BJ (cell line): ENCODE measurements at regions of chr1 and their contacts with region 1.

Region 1: DNA sequence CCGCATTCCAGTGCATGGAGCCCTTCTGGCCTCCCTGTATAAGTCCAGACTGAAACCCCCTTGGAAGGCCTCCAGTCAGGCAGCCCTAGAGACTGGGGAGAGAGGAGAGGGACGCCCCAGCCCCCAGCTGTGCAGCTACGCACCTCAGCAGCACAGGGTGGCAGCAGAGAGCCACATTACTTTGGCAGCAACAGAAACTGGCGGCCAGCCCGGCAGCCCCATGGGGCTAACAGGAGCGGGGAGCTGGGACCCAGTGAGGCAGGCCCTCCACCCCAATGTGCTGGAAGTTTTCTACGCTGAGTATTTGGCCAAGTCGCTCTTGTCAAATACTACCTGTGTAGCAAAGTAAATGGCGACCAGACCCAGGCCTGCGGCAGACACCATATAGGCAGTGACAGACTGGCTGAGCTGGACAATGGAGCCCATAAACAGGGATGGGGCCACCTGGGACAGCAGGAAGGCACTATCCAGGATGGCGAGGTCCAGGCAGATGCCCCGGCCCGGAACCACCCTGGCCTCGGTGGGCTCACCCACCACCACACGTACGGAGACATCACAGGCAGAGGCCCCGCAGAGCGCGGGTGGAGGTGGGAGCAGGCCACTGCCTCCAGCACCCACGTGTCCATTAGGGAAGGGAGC is 21.2 kb downstream of the SLC45A3 start:
- DNase-seq: no peak
- H3K4me3 ChIP-seq: no peak overlapping the region
- H3K27me3 ChIP-seq: no peaks in the 10 kb centered on the region
- CTCF ChIP-seq: peak; percentile 92

Region 2: GRCh38 chr1:204802401-204803175 is 856.5 kb before region 1 on chr1:
- CTCF ChIA-PET with region 1: no interaction called
- POLR2A ChIA-PET with region 1: no interaction called
- DNase-seq: no peak
- H3K4me3 ChIP-seq: no peak overlapping the region
- H3K27me3 ChIP-seq: peaks cover 19% of the 10 kb centered on the region
- CTCF ChIP-seq: no peak

Region 3: GRCh38 chr1:205578780-205579606 is 80.1 kb before region 1 on chr1:
- CTCF ChIA-PET with region 1: interaction called, 18 read pairs
- POLR2A ChIA-PET with region 1: no interaction called
- DNase-seq: no peak
- H3K4me3 ChIP-seq: no peak overlapping the region
- H3K27me3 ChIP-seq: peaks cover 52% of the 10 kb centered on the region
- CTCF ChIP-seq: no peak

Region 4: GRCh38 chr1:205600085-205600484 is 59.0 kb before region 1 on chr1:
- CTCF ChIA-PET with region 1: interaction called, 426 read pairs
- POLR2A ChIA-PET with region 1: no interaction called
- DNase-seq: no peak
- H3K4me3 ChIP-seq: no peak overlapping the region
- H3K27me3 ChIP-seq: no peaks in the 10 kb centered on the region
- CTCF ChIP-seq: no peak

Region 5: GRCh38 chr1:205680073-205680851 is 21.2 kb after region 1 on chr1 and contains the start of gene SLC45A3:
- CTCF ChIA-PET with region 1: interaction called, 161 read pairs
- POLR2A ChIA-PET with region 1: no interaction called
- DNase-seq: no peak
- H3K4me3 ChIP-seq: peak within 1 kb of the TSS; percentile 58
- H3K27me3 ChIP-seq: peaks cover 2% of the 10 kb centered on the region; the same call in 1 of the 2 replicates
- CTCF ChIP-seq: no peak
- polyA plus RNA-seq, gene SLC45A3: 0.70 and 0.91 TPM in 2 replicates

Region 6: DNA sequence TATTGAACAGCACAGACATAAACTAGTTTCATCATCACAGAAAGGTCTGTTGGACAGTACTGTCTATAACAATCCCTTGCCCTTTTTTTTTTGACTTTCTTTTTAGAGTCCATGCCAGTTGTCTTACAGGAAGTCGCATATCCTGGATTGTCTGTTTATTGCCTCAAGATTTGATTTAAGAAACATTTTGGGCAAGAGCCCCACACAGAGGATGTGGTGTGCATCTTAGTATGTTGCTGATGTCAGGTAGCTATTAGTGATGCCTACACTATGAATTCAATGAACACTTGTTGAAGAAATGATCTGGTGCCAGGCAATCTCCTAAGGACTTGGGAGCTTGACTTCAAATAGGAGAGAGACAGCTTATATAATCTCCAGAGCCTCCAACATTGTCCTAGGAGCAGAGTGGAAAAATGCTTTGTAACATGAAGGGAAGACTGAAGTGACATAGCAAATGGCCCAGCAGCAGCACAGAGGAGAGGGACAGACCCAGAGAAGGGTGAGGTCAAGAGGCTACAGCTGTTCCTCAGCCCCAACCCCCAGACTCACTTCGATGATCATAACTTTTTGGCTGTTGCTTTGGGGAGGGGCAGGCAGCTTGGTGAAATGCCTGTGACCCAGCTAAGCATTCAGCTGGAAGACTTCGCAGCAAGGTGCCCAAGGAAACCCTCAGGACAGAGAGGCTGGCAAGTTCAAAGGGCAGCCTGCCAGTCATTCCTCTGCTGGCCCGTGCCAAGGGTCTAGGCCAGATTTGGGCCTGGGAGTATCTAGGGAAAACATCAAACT is 123.8 kb after region 1 on chr1:
- CTCF ChIA-PET with region 1: interaction called, 10 read pairs
- POLR2A ChIA-PET with region 1: no interaction called
- DNase-seq: no peak
- H3K4me3 ChIP-seq: no peak overlapping the region
- H3K27me3 ChIP-seq: no peaks in the 10 kb centered on the region
- CTCF ChIP-seq: no peak

Region 7: DNA sequence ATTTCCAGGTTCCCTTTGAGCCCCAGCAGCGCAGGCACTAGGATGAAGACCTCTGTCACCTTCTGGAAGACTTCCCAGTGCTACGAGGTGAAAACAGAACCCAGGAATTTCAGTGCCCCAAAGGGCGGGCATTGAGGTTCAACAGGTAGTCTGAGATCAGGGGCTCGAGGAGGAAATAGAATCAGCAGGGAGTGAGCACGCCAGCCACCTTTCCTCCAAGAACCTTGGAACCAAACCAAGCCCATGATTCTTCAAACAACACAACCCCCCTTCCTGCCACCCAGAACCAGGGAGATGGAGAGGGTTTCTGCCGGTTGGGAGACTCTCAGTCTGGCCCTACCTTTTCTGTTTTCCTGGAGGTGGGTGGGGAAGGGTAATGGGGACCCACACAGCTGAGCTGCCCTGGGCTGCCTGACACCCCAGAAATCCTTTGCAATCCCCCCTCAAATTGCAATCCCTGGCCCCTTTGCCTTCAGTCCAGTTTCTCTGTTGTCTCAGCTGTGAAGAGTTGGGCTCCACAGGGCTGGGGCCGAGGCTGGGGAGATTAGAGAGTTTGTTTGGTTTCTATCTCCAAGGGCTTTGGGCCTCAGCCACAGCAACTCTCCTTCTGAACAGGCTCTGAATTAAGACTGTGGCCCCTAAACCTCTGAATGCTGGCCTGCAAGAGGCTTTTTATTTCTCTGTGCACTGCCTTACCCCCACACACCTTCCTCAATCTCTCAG is 142.1 kb after region 1 on chr1:
- CTCF ChIA-PET with region 1: no interaction called
- POLR2A ChIA-PET with region 1: no interaction called
- DNase-seq: no peak
- H3K4me3 ChIP-seq: no peak overlapping the region
- H3K27me3 ChIP-seq: no peaks in the 10 kb centered on the region
- CTCF ChIP-seq: no peak

Region 8: GRCh38 chr1:205919026-205919746 is 260.1 kb after region 1 on chr1:
- CTCF ChIA-PET with region 1: interaction called, 28 read pairs
- POLR2A ChIA-PET with region 1: no interaction called
- DNase-seq: no peak
- H3K4me3 ChIP-seq: no peak overlapping the region
- H3K27me3 ChIP-seq: no peaks in the 10 kb centered on the region; the same call in 1 of the 2 replicates
- CTCF ChIP-seq: peak; percentile 88

Region 9: GRCh38 chr1:205939690-205940330 is 280.7 kb after region 1 on chr1:
- CTCF ChIA-PET with region 1: no interaction called
- POLR2A ChIA-PET with region 1: no interaction called
- DNase-seq: no peak
- H3K4me3 ChIP-seq: no peak overlapping the region
- H3K27me3 ChIP-seq: peaks cover 13% of the 10 kb centered on the region
- CTCF ChIP-seq: no peak